Activated naive CD4-positive, alpha-beta T cell treated with anti-CD3 and anti-CD28 coated beads, Interleukin-2, amount 10 ng/mL, durations not matched to agents 7 days and 5 days (primary cell): ENCODE measurements at regions of chr1 and their contacts with region 1.

Region 1: DNA sequence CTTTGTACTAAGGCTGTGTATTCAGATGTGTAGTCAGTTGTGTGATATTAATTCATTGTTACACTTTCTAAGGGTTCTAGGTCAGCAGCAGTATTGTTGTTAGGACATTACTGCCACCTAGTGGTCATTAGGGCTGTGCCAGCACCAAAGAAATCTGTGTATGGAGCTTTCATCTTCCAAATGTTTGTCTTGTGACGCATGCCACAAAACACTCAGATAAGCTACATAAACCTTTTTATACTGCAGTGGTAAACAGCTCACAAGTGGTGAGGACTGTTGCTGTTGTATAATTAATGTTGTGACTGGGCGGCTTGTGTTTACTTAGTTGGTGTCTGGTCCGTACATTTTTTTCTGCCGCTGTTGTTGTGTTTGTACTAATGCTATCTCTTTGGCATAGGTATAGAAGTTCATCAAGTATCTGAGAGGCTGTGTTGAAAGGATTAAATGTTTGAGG is 51.7 kb downstream of the S1PR1 start:
- DNase-seq: peak; percentile 78
- H3K4me3 Mint-ChIP-seq: no peak overlapping the region
- H3K27ac Mint-ChIP-seq: peak overlapping the region; percentile 35
- H3K4me1 Mint-ChIP-seq: peaks cover 92% of the 10 kb centered on the region
- H3K27me3 Mint-ChIP-seq: no peaks in the 10 kb centered on the region

Region 2: GRCh38 chr1:100866041-100866900 is 422.2 kb before region 1 on chr1:
- CTCF ChIA-PET with region 1: interaction called, 12 read pairs
- DNase-seq: no peak
- H3K4me3 Mint-ChIP-seq: no peak overlapping the region
- H3K27ac Mint-ChIP-seq: no peak overlapping the region
- H3K4me1 Mint-ChIP-seq: no peaks in the 10 kb centered on the region
- H3K27me3 Mint-ChIP-seq: no peaks in the 10 kb centered on the region

Region 3: GRCh38 chr1:101130673-101131072 is 157.8 kb before region 1 on chr1:
- CTCF ChIA-PET with region 1: interaction called, 113 read pairs
- DNase-seq: no peak
- H3K4me3 Mint-ChIP-seq: no peak overlapping the region
- H3K27ac Mint-ChIP-seq: peak overlapping the region; percentile 84
- H3K4me1 Mint-ChIP-seq: peaks cover 77% of the 10 kb centered on the region
- H3K27me3 Mint-ChIP-seq: no peaks in the 10 kb centered on the region

Region 4: DNA sequence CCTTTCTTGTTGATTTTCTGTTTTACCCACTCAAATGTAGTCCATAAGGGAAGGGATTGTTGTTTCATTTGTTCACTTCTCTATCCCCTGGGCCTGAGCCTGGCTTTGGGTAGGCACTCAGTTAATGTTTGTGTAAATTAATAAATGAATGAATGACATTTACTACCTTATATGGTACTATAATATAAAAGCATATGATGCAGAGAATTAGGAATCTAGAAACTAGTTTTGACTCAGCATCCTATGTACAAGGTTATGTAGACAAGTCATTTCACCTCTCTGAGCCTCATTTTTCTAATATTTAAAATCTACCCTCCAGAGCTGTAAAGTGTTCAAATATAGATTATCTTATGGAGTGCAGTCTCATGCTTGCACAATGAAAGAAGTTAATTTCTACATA is 120.6 kb before region 1 on chr1:
- CTCF ChIA-PET with region 1: no interaction called
- DNase-seq: no peak
- H3K4me3 Mint-ChIP-seq: no peak overlapping the region
- H3K27ac Mint-ChIP-seq: no peak overlapping the region
- H3K4me1 Mint-ChIP-seq: peaks cover 9% of the 10 kb centered on the region
- H3K27me3 Mint-ChIP-seq: no peaks in the 10 kb centered on the region

Region 5: GRCh38 chr1:101238681-101239094 is 49.8 kb before region 1 on chr1:
- CTCF ChIA-PET with region 1: interaction called, 104 read pairs
- DNase-seq: peak; percentile 92
- H3K4me3 Mint-ChIP-seq: peak overlapping the region; percentile 97
- H3K27ac Mint-ChIP-seq: peak overlapping the region; percentile 99
- H3K4me1 Mint-ChIP-seq: peaks cover 52% of the 10 kb centered on the region
- H3K27me3 Mint-ChIP-seq: peaks cover 14% of the 10 kb centered on the region

Region 6: GRCh38 chr1:101253976-101254674 is 34.4 kb before region 1 on chr1:
- CTCF ChIA-PET with region 1: interaction called, 23 read pairs
- DNase-seq: no peak
- H3K4me3 Mint-ChIP-seq: no peak overlapping the region
- H3K27ac Mint-ChIP-seq: no peak overlapping the region
- H3K4me1 Mint-ChIP-seq: peaks cover 41% of the 10 kb centered on the region
- H3K27me3 Mint-ChIP-seq: no peaks in the 10 kb centered on the region

Region 7: GRCh38 chr1:101325144-101325543 is 36.6 kb after region 1 on chr1:
- CTCF ChIA-PET with region 1: no interaction called
- DNase-seq: no peak
- H3K4me3 Mint-ChIP-seq: no peak overlapping the region
- H3K27ac Mint-ChIP-seq: no peak overlapping the region
- H3K4me1 Mint-ChIP-seq: no peaks in the 10 kb centered on the region
- H3K27me3 Mint-ChIP-seq: peaks cover 14% of the 10 kb centered on the region

Region 8: GRCh38 chr1:101357444-101357986 is 69.0 kb after region 1 on chr1:
- CTCF ChIA-PET with region 1: interaction called, 16 read pairs
- DNase-seq: peak; percentile 78
- H3K4me3 Mint-ChIP-seq: no peak overlapping the region
- H3K27ac Mint-ChIP-seq: peak overlapping the region; percentile 37
- H3K4me1 Mint-ChIP-seq: peaks cover 16% of the 10 kb centered on the region
- H3K27me3 Mint-ChIP-seq: peaks cover 7% of the 10 kb centered on the region